IMR-90 (cell line): ENCODE measurements at regions of chr15 and their contacts with region 1.

Region 1: GRCh38 chr15:49242820-49243219 is 72.8 kb downstream of the GALK2 start:
- DNase-seq: peak; percentile 95
- ATAC-seq: peak; percentile 81
- H3K4me3 ChIP-seq: no peak overlapping the region
- H3K27ac ChIP-seq: peak overlapping the region; percentile 91
- H3K4me1 ChIP-seq: peaks cover 15% of the 10 kb centered on the region
- H3K27me3 ChIP-seq: no peaks in the 10 kb centered on the region
- CTCF ChIP-seq: no peak
- POLR2A ChIP-seq: no peak
- RAD21 ChIP-seq: no peak

Region 2: DNA sequence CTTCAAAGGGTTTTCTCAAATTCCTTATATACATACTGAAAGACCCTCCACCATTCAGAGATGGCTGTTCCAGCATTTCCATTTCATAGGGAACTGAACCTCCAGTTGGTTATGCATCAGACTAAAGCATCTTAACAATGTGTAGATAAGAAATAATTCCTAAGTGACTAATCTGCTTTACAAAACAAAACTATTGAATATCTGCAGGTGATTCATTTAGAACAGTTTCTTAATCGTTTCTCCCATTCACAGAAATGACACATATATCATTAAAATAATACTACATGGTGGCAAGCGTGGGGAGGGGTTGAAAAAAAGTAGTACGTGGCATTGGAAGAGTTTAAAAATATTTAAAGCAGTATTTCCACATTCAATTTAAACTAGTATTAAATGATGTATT is 106.9 kb before region 1 on chr15:
- CTCF ChIA-PET with region 1: no interaction called
- POLR2A ChIA-PET with region 1: no interaction called
- dilution Hi-C with region 1: no loop called
- in situ Hi-C with region 1: no loop called
- intact Hi-C with region 1: no loop called
- DNase-seq: peak; percentile 92
- ATAC-seq: peak; percentile 86
- H3K4me3 ChIP-seq: no peak overlapping the region
- H3K27ac ChIP-seq: no peak overlapping the region; the same call in 1 of the 2 replicates
- H3K4me1 ChIP-seq: peaks cover 11% of the 10 kb centered on the region
- H3K27me3 ChIP-seq: no peaks in the 10 kb centered on the region
- CTCF ChIP-seq: no peak
- POLR2A ChIP-seq: no peak
- RAD21 ChIP-seq: no peak

Region 3: GRCh38 chr15:49179433-49180190 is 63.2 kb before region 1 on chr15:
- CTCF ChIA-PET with region 1: no interaction called
- POLR2A ChIA-PET with region 1: interaction called, 12 read pairs
- dilution Hi-C with region 1: no loop called
- in situ Hi-C with region 1: no loop called
- intact Hi-C with region 1: no loop called
- DNase-seq: no peak
- ATAC-seq: no peak
- H3K4me3 ChIP-seq: no peak overlapping the region
- H3K27ac ChIP-seq: no peak overlapping the region
- H3K4me1 ChIP-seq: no peaks in the 10 kb centered on the region
- H3K27me3 ChIP-seq: no peaks in the 10 kb centered on the region
- CTCF ChIP-seq: no peak
- POLR2A ChIP-seq: no peak
- RAD21 ChIP-seq: no peak

Region 4: GRCh38 chr15:49313650-49314049 is 70.8 kb after region 1 on chr15:
- CTCF ChIA-PET with region 1: no interaction called
- POLR2A ChIA-PET with region 1: no interaction called
- dilution Hi-C with region 1: no loop called
- in situ Hi-C with region 1: no loop called
- intact Hi-C with region 1: no loop called
- DNase-seq: peak; percentile 94
- ATAC-seq: peak; percentile 95
- H3K4me3 ChIP-seq: no peak overlapping the region
- H3K27ac ChIP-seq: peak overlapping the region; percentile 52; the same call in 1 of the 2 replicates
- H3K4me1 ChIP-seq: peaks cover 6% of the 10 kb centered on the region
- H3K27me3 ChIP-seq: no peaks in the 10 kb centered on the region
- CTCF ChIP-seq: no peak
- POLR2A ChIP-seq: no peak
- RAD21 ChIP-seq: no peak

Region 5: DNA sequence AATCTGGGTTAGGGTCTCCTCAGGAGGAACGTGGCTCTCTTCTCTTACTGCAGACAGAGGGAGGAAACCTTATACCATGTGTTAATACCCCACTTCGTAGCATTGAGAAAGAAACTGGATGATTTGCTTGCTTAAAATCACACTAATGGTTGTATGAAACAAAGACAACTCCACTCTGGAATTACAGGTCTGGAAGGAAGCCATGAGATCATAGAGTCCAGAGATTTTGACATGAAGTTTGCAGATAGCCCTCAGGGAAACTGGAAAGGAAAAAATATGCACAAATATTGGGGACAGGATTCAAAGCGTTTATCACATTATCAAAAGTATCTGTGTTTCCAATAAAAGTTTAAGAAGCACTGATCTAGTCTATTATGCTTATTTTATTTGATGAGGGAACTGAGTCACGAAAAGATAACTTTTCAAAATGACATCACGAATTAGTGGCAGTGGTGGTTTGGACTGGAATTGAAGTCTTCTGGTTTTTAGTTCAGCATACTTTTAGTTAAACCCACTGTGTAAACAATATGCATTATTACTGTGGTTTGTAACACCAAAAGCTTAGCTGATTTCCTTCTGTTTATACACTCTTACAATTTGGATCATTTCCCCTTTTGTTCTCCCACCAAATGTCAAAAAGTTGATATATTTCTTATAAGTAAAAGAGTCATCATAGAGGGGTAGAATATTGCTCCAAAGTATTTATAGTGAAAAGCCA is 197.0 kb after region 1 on chr15:
- CTCF ChIA-PET with region 1: no interaction called
- POLR2A ChIA-PET with region 1: no interaction called
- dilution Hi-C with region 1: no loop called
- in situ Hi-C with region 1: no loop called
- intact Hi-C with region 1: no loop called
- DNase-seq: no peak
- ATAC-seq: no peak
- H3K4me3 ChIP-seq: no peak overlapping the region
- H3K27ac ChIP-seq: no peak overlapping the region
- H3K4me1 ChIP-seq: peaks cover 20% of the 10 kb centered on the region
- H3K27me3 ChIP-seq: no peaks in the 10 kb centered on the region
- CTCF ChIP-seq: no peak
- POLR2A ChIP-seq: no peak
- RAD21 ChIP-seq: no peak

Region 6: DNA sequence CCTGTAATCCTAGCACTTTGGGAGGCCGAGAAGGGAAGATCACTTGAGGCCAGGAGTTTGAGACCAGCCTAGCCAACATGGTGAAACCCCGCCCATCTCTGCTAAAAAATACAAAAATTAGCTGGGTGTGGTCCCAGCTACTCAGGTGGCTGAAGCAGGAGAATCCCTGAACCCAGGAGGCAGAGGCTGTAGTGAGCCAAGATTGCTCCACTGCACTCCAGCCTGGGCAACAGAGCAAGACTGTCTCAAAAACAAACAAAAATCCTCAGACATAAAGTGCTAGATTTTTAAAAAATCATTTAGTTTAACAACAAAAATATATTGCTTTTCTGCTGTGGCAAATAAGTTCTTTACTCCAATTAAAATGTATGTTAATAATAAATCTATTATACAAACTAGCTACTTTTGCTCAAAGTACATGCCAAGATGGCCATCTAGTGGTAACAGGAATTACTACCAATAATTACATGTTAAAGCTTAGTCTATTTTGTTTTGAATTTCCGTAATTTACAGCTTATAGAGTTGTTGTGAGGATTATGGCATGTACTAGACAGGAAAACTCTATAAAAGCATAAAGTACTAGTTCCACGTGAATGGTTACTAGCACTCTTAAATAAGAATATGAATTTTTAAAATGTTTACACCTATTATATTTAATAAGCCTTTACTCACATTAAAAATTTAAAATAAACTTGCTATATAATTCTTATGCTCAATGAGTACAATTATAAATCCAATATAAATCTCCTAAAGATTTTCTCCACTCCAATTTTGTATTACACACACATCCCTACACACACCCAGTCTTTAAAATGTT is 1073.2 kb after region 1 on chr15:
- CTCF ChIA-PET with region 1: no interaction called
- POLR2A ChIA-PET with region 1: no interaction called
- dilution Hi-C with region 1: no loop called
- in situ Hi-C with region 1: loop called (anchors 25 kb)
- intact Hi-C with region 1: loop called (anchors 10 kb)
- DNase-seq: peak; percentile 68
- ATAC-seq: peak; percentile 81
- H3K4me3 ChIP-seq: no peak overlapping the region
- H3K27ac ChIP-seq: no peak overlapping the region
- H3K4me1 ChIP-seq: peaks cover 2% of the 10 kb centered on the region; the same call in 1 of the 2 replicates
- H3K27me3 ChIP-seq: no peaks in the 10 kb centered on the region
- CTCF ChIP-seq: peak; percentile 71
- POLR2A ChIP-seq: no peak
- RAD21 ChIP-seq: peak; percentile 77